ENCODE measurements at regions of chr6 and their contacts with region 1.

Region 1: DNA sequence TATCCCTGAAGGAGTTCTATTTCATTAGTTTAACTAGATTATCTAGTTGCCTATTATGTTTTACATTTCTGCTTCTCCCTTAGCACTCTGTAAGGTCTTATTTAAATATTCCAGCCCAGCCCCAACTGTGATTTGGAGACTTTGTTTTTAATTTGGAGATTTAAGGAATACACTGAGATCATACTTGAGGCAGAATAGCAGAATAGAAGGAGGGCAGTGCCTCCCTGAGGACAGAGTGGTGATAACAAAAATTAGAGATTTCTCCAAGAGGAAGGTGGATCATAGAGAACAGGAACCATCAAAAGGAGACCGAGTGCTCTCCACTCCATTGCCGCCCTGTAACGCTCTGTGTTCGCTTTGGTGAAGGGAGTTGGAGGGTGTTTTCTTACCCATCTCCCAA is 14.8 kb upstream of the CD164 start:
- DNase-seq: peak; percentile 44
- ATAC-seq: peak; percentile 92
- H3K4me3 ChIP-seq: no peak overlapping the region
- H3K27ac ChIP-seq: no peak overlapping the region
- H3K4me1 ChIP-seq: no peaks in the 10 kb centered on the region
- H3K27me3 ChIP-seq: peaks cover 7% of the 10 kb centered on the region
- CTCF ChIP-seq: peak; percentile 61
- POLR2A ChIP-seq: no peak
- RAD21 ChIP-seq: peak; percentile 71

Region 2: DNA sequence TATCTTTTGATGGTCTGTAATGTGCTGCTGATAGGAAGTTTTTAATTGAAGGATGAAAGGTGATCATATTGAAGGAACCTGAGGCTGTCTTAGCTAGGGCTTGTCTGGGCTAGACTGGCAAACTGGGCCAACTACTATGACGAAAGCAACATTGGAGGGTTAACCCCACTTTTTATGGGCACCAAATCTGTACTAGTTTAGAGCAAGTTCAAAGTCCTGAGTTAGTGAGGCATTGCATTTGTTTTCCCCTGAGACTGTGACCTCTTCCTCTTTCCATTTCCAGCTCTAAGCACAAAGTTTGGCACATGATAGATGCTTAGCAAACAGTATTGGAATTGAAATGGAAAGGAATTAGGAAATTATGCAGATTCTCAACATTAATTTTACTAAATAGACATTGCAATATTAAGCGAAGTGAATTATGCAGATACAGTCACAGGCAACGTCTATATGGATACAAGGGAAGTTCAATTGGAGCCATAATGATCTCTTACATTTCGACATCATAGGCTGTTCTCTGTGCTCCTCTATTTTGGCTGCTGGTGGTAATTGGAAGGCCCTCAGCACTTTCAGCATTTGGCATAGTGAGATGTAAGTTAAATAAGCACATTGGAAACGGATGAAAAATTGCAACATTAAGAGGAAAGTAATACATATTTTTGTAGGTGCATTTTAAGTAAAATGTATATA is 279.5 kb before region 1 on chr6:
- CTCF ChIA-PET with region 1: no interaction called
- POLR2A ChIA-PET with region 1: no interaction called
- dilution Hi-C with region 1: no loop called
- in situ Hi-C with region 1: no loop called
- intact Hi-C with region 1: no loop called
- DNase-seq: no peak
- ATAC-seq: no peak
- H3K4me3 ChIP-seq: no peak overlapping the region
- H3K27ac ChIP-seq: no peak overlapping the region
- H3K4me1 ChIP-seq: 0 out of 2 replicates have a peak, but pooled peaks cover 2% of the 10 kb centered on the region
- H3K27me3 ChIP-seq: no peaks in the 10 kb centered on the region
- CTCF ChIP-seq: no peak
- POLR2A ChIP-seq: no peak
- RAD21 ChIP-seq: no peak

Region 3: GRCh38 chr6:109187399-109188114 is 209.5 kb before region 1 on chr6:
- CTCF ChIA-PET with region 1: interaction called, 7 read pairs
- POLR2A ChIA-PET with region 1: no interaction called
- dilution Hi-C with region 1: no loop called
- in situ Hi-C with region 1: loop called (anchors 25 kb)
- intact Hi-C with region 1: loop called (anchors 1 kb)
- DNase-seq: peak; percentile 28
- ATAC-seq: peak; percentile 64
- H3K4me3 ChIP-seq: no peak overlapping the region
- H3K27ac ChIP-seq: no peak overlapping the region
- H3K4me1 ChIP-seq: no peaks in the 10 kb centered on the region
- H3K27me3 ChIP-seq: peaks cover 17% of the 10 kb centered on the region
- CTCF ChIP-seq: peak; percentile 69
- POLR2A ChIP-seq: no peak
- RAD21 ChIP-seq: peak; percentile 81

Region 4: DNA sequence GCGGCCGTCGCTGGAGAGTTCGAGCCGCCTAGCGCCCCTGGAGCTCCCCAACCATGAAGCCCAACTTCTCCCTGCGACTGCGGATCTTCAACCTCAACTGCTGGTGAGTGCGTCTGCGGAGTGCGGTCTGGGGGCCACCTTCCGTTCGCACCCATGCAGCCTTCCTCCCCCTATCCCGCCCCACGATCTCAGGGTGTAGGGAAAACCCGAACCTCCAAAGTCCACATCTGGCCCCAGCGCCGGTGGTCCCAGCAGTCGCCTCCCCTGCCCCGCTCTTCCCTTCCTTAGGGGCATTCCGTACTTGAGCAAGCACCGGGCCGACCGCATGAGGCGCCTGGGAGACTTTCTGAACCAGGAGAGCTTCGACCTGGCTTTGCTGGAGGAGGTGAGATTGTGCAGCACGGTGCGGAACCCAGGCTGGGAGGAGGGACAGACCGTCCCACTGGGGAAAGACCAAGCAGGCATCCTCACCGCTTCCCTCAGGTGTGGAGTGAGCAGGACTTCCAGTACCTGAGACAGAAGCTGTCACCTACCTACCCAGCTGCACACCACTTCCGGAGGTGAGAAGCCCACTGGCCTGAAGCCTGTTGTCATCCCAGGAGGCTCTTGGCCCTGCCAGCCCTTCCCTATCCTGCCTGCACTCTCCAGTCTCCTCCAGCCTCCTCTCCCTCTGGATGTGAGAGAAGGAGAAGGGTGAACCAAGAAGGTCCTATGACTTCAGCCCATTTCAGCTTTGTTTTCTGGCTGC is 44.2 kb after region 1 on chr6:
- CTCF ChIA-PET with region 1: no interaction called
- POLR2A ChIA-PET with region 1: no interaction called
- dilution Hi-C with region 1: no loop called
- in situ Hi-C with region 1: no loop called
- intact Hi-C with region 1: no loop called
- DNase-seq: peak; percentile 47
- ATAC-seq: peak; percentile 37
- H3K4me3 ChIP-seq: peak overlapping the region; percentile 70
- H3K27ac ChIP-seq: peak overlapping the region; percentile 48
- H3K4me1 ChIP-seq: peaks cover 8% of the 10 kb centered on the region
- H3K27me3 ChIP-seq: no peaks in the 10 kb centered on the region
- CTCF ChIP-seq: 0 out of 2 replicates have a peak, but pooled peaks have one; percentile 12
- POLR2A ChIP-seq: no peak
- RAD21 ChIP-seq: no peak

Region 5: GRCh38 chr6:109644131-109644530 is 247.1 kb after region 1 on chr6:
- CTCF ChIA-PET with region 1: no interaction called
- POLR2A ChIA-PET with region 1: no interaction called
- dilution Hi-C with region 1: no loop called
- in situ Hi-C with region 1: no loop called
- intact Hi-C with region 1: no loop called
- DNase-seq: no peak
- ATAC-seq: no peak
- H3K4me3 ChIP-seq: no peak overlapping the region
- H3K27ac ChIP-seq: no peak overlapping the region
- H3K4me1 ChIP-seq: no peaks in the 10 kb centered on the region
- H3K27me3 ChIP-seq: no peaks in the 10 kb centered on the region
- CTCF ChIP-seq: no peak
- POLR2A ChIP-seq: no peak
- RAD21 ChIP-seq: no peak